Body of pancreas (tissue), 4 donors: ENCODE measurements at regions of chr4 and their contacts with region 1.

Region 1: GRCh38 chr4:145001635-145002034 is 96.4 kb downstream of the ANAPC10 start:
- DNase-seq: no peak
- ATAC-seq: no peak
- H3K4me3 ChIP-seq: no peak overlapping the region
- H3K27ac ChIP-seq: no peak overlapping the region
- H3K4me1 ChIP-seq: no peaks in the 10 kb centered on the region
- H3K27me3 ChIP-seq: no peaks in the 10 kb centered on the region
- CTCF ChIP-seq: no peak
- POLR2A ChIP-seq: no peak

Region 2: DNA sequence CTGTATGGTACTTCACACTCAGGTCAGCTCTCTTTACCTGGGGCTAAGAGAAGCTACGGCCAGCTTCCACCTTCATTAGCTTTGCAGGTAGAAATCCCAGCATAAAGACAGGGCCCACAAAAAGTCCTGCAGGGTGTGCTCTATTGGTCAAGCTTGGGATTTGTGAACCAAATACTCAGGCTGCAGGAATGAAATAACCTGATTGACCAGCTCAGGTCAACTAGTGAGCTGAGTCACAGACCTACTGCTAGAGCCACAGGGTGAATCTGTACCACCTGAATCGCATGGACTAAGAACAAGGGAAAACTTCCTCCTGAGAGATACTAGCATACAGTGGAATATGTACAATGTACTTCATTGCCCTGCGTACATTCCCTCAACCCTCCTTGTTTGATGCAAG is 183.5 kb before region 1 on chr4:
- intact Hi-C with region 1: loop called (anchors 10 kb)
- DNase-seq: no peak
- ATAC-seq: no peak
- H3K4me3 ChIP-seq: no peak overlapping the region
- H3K27ac ChIP-seq: no peak overlapping the region
- H3K4me1 ChIP-seq: no peaks in the 10 kb centered on the region
- H3K27me3 ChIP-seq: no peaks in the 10 kb centered on the region
- CTCF ChIP-seq: no peak
- POLR2A ChIP-seq: no peak